Adrenal gland (tissue), 19 donors: ENCODE measurements at regions of chr19 and their contacts with region 1.

Region 1: DNA sequence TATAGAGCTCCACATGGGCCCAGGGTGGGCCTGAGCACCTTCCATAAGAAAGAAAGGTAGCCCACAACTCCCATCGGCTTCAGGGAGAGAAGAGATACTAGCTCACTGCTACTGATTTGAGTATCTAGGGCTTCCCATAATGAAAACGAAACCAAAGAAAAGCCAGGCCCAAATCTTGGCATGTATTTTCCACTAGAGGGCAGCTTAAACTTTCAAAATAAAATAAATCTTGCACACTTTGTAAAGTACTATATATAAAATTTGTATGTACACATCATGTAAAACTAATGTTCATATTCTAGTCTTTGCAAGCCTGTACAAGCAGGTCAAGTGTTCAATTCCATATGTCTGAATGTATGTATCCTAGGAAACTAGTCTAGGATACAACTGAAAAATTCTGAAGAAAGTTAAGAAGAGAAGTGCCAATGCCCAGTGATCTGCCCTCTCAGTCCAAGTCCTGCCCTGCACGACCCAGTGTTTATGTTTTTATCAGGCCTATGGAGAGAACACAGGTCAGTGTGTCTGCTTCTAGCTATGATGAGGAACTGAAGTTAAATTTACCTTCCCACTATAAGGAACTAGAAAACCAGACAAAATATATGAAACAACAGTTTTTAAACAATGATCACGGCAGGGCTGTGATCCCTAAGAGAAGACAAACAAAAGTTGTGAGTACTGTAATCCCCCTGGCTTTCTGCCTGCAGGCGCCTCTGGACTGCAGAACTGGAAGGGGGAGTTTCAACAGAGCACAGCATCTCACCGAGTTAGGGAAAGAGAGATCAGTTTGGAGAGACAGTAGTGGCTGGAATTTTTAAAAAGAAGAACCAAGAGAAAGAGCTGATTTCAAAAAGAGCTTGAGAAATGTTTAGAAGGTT is 475.7 kb downstream of the UQCRFS1 start:
- DNase-seq: peak in 3 of 7 donors; percentile 16 to 27 (median 19)
- H3K4me3 ChIP-seq: no peak overlapping the region
- H3K27ac ChIP-seq: no peak overlapping the region
- H3K4me1 ChIP-seq: no peaks in the 10 kb centered on the region
- H3K27me3 ChIP-seq: no peaks in the 10 kb centered on the region
- CTCF ChIP-seq: peak; percentile 32 to 69 (median 56)
- POLR2A ChIP-seq: no peak

Region 2: DNA sequence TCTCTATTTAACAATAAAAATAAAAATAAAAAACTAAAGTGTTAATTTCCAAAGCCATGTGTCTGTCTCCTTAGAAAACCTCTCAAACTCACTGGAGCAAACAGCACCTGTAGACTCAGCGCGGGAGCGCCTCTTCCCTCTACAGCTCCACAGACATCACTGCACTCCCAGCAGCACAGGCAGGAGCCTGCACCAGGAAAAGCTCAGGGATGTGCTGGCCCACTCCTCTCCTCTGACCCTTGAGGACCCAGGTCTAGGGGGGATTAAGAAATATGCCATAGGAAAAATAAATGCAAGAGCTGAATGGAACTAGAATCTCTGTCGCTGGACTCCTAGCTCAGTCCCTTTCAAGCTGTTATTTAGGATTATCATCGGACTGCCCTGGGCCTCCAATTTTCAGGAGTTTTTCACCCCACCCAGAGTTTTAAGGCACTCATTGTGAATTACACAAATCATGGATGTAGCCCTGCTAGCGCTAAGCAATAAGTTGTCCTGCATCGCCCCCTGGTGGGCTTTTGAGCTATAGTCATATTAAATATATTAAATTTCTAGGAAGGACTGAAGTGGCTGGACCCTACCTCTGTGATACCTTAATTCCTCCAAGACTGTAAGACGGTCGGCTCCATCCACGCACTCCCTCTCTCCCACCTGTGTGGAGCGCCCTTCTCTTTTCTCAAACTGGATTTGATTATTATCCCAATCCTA is 141.8 kb after region 1 on chr19:
- intact Hi-C with region 1: loop called in 1 of 2 experiments (anchors 5 kb)
- DNase-seq: peak; percentile 59 to 85 (median 73)
- H3K4me3 ChIP-seq: no peak overlapping the region
- H3K27ac ChIP-seq: no peak overlapping the region
- H3K4me1 ChIP-seq: no peaks in the 10 kb centered on the region
- H3K27me3 ChIP-seq: no peaks in the 10 kb centered on the region
- CTCF ChIP-seq: peak; percentile 64 to 79 (median 72)
- POLR2A ChIP-seq: no peak